ENCODE measurements at regions of chr17 and their contacts with region 1.

Region 1: GRCh38 chr17:47970704-47971463 is at the start of gene CDK5RAP3:
- DNase-seq: peak; percentile 99
- H3K4me3 ChIP-seq: peak within 1 kb of the TSS; percentile 54 to 73 (median 64)
- H3K27ac ChIP-seq: peak within 1 kb of the TSS; percentile 94
- H3K4me1 ChIP-seq: peaks cover 0 to 6% (median 3%) of the 10 kb centered on the region in 4 experiments; a peak in 6 of 7 replicates
- H3K27me3 ChIP-seq: no peaks in the 10 kb centered on the region
- CTCF ChIP-seq: peak; percentile 87 to 96 (median 96)
- EP300 ChIP-seq: peak in 1 of 2 experiments; percentile 17; a peak in 1 of 3 replicates
- POLR2A ChIP-seq: peak; percentile 66 to 91
- RAD21 ChIP-seq: peak; percentile 68 to 75; a peak in 3 of 4 replicates
- total RNA-seq, gene CDK5RAP3: 88.2 and 97.6 TPM in 2 replicates

Region 2: GRCh38 chr17:47840740-47841603 is 129.9 kb before region 1 on chr17 and contains the start of gene SCRN2:
- CTCF ChIA-PET with region 1: interaction called, 55 read pairs
- POLR2A ChIA-PET with region 1: interaction called, 3 read pairs
- DNase-seq: peak; percentile 85 to 99
- H3K4me3 ChIP-seq: peak within 1 kb of the TSS; percentile 47 to 92 (median 80)
- H3K27ac ChIP-seq: no peak within 1 kb of the TSS
- H3K4me1 ChIP-seq: peaks cover 0 to 23% (median 8%) of the 10 kb centered on the region in 4 experiments; a peak in 5 of 7 replicates
- H3K27me3 ChIP-seq: peaks cover 2 to 18% (median 12%) of the 10 kb centered on the region in 4 experiments
- CTCF ChIP-seq: peak; percentile 90 to 96 (median 90)
- EP300 ChIP-seq: no peak
- POLR2A ChIP-seq: no peak
- RAD21 ChIP-seq: peak; percentile 95 to 97
- total RNA-seq, gene SCRN2: 24.4 and 27.4 TPM in 2 replicates

Region 3: GRCh38 chr17:47895856-47896671 is 74.8 kb before region 1 on chr17 and contains the start of gene SP2:
- CTCF ChIA-PET with region 1: interaction called, 13 read pairs
- POLR2A ChIA-PET with region 1: interaction called, 11 read pairs
- DNase-seq: peak; percentile 100
- H3K4me3 ChIP-seq: peak within 1 kb of the TSS; percentile 85 to 99 (median 93)
- H3K27ac ChIP-seq: peak within 1 kb of the TSS; percentile 83
- H3K4me1 ChIP-seq: peaks cover 0 to 9% (median 4%) of the 10 kb centered on the region in 4 experiments; a peak in 6 of 7 replicates
- H3K27me3 ChIP-seq: no peaks in the 10 kb centered on the region; a peak in 1 of 7 replicates
- CTCF ChIP-seq: no peak; a peak in 1 of 4 replicates
- EP300 ChIP-seq: no peak
- POLR2A ChIP-seq: peak; percentile 53 to 75
- RAD21 ChIP-seq: no peak
- total RNA-seq, gene SP2: 11.0 and 13.8 TPM in 2 replicates

Region 4: DNA sequence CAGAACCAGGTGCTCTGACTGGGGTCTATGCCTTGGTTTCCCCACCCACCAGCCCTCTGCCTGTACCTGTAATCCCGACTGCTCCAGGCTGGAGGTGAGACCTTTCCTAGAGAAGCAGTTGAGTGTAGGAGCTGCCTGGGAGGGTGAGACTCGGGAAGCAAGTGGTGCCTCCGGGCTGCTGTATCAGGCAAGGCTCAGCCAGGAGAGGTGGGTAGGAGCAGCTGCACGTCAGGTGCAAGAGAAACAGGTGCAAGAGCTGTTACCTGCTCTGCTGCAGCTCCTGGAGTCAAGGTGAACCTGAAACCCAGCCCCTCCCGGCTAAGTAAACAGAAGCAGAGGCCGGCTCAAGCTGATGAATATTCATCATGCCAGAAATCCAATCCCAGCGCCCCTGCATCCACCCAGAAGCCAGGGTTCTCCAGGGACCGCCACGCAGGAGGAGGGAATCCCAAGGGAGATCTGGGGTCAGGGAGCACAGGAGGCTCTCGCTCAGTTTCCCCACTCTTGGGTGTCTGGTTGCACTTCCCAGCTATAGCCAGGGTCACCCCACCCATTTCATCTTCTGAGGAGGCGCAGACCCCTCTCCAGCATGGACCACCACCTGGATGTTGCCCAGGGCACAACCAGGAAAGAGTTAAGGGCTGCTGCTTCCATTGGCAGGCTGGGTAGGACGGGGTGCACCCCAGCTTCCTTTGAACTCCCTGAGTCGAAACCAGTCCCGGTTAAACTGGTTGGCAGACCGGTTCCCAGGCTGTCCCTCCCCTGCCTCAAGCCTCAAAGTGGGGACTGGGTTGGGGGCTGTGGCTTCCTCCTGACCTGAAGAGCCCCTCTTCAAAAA is 13.1 kb before region 1 on chr17 and contains the start of gene PRR15L:
- CTCF ChIA-PET with region 1: interaction called, 1,010 read pairs
- POLR2A ChIA-PET with region 1: interaction called, 16 read pairs
- DNase-seq: peak in 1 of 2 experiments; percentile 64
- H3K4me3 ChIP-seq: peak within 1 kb of the TSS in 3 of 4 experiments; percentile 18 to 42 (median 41); a peak in 5 of 8 replicates
- H3K27ac ChIP-seq: no peak within 1 kb of the TSS
- H3K4me1 ChIP-seq: peaks cover 0 to 20% (median 17%) of the 10 kb centered on the region in 4 experiments; a peak in 6 of 7 replicates
- H3K27me3 ChIP-seq: no peaks in the 10 kb centered on the region
- CTCF ChIP-seq: no peak
- EP300 ChIP-seq: no peak
- POLR2A ChIP-seq: no peak
- RAD21 ChIP-seq: no peak
- total RNA-seq, gene PRR15L: 0.26 and 0.34 TPM in 2 replicates

Region 5: GRCh38 chr17:48002266-48002915 is 31.5 kb after region 1 on chr17:
- CTCF ChIA-PET with region 1: interaction called, 19 read pairs
- POLR2A ChIA-PET with region 1: interaction called, 4 read pairs
- DNase-seq: no peak
- H3K4me3 ChIP-seq: peak overlapping the region in 1 of 4 experiments; percentile 12; a peak in 3 of 8 replicates
- H3K27ac ChIP-seq: peak overlapping the region; percentile 68
- H3K4me1 ChIP-seq: peaks cover 18 to 41% (median 28%) of the 10 kb centered on the region in 4 experiments
- H3K27me3 ChIP-seq: no peaks in the 10 kb centered on the region
- CTCF ChIP-seq: no peak
- EP300 ChIP-seq: no peak
- POLR2A ChIP-seq: no peak
- RAD21 ChIP-seq: no peak

Measured in H1 (cell line).